GM23248 (cell line): ENCODE measurements at regions of chr13 and their contacts with region 1.

Region 1: DNA sequence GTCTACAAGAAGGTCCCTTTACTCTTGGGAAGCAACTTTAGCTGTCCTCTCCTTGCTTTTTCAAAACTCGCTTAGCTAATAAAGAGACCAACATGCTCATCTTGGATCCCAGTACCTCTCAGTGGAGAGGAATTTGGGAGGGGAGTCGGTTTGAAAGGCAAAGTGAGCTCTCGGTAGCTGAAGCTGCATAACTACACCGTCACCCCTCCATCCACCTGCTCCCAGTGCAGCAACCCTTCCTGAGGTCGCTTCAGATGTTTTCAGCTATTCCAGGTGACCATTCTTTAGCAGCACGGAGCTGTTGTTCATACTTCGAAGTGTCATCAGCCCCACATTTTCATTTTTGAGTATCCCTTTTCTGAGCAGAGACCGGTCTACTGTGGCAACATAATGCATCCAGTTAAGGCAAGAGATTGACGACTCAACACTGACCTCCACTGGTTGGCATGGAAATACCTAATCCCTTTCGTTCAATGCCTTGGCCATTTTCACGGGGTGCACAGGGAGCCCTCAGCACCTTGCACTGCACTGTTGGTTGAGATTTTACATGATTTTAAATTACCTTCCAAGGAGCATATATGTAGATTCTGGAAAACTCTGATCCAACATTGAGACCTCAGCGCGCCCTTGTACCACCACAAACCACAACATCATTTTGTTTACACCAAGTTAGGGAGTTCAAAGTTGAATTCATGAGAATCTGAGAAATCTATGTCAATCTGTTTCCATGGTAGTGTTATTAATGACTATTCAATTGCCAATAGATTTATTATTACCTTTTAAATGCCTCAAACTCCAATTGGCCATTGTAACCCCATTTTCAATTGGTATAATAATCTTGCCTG is 42.2 kb downstream of the DLEU7 start:
- DNase-seq: peak; percentile 82
- H3K4me3 ChIP-seq: no peak overlapping the region
- H3K27ac ChIP-seq: no peak overlapping the region
- H3K4me1 ChIP-seq: peaks cover 28% of the 10 kb centered on the region
- H3K27me3 ChIP-seq: no peaks in the 10 kb centered on the region

Region 2: DNA sequence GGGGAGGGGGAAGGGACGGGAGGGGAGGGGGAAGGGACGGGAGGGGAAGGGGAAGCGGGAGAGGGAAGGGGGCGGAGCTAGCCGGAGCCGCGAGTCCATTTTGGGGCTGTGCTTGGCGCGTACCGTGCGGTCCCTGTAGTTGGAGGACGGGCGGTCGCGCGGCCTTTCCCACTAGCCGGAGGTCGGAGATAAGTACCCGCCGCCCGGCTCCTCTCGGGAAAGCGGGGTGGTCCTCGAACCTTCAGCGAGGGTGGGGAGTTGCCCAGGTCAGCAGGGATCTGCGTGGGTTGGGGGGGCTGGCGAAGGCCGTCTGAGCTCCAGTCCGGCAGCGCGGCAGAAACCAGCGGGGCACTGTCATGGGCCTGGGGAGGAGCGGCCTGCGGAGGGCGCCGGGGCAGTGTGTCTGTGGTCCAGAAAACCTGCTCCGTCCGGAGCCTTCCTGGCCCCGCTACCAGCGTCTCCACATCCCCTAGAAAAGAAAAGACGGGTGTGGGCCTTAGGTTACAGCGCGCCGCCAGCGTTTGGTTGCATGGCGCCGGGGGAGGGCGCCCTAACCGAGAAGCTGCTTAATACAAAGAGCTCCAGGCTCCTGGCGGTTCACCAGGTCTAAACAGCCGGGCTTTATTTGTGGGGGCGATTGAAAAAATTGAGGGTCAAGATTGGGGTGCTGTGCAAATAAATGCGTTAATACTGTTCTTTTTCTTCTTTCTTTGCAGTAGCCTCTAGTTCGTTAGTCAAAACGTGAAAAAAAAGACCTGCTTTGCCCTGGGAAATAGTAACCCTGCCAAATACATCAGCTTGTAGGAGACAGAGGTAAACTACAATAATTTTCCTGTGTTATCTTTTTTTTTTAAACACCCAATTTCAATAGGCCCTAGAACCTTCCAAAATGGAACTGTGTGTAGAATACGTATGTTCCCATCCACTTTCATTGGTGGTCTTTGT is 804.1 kb before region 1 on chr13 and contains the start of gene TRIM13:
- in situ Hi-C with region 1: loop called (anchors 25 kb)
- DNase-seq: peak; percentile 96
- H3K4me3 ChIP-seq: peak within 1 kb of the TSS; percentile 93
- H3K27ac ChIP-seq: peak within 1 kb of the TSS; percentile 95
- H3K4me1 ChIP-seq: peaks cover 23% of the 10 kb centered on the region
- H3K27me3 ChIP-seq: no peaks in the 10 kb centered on the region
- total RNA-seq, gene TRIM13: 20.2 and 22.3 TPM in 2 replicates

Region 3: DNA sequence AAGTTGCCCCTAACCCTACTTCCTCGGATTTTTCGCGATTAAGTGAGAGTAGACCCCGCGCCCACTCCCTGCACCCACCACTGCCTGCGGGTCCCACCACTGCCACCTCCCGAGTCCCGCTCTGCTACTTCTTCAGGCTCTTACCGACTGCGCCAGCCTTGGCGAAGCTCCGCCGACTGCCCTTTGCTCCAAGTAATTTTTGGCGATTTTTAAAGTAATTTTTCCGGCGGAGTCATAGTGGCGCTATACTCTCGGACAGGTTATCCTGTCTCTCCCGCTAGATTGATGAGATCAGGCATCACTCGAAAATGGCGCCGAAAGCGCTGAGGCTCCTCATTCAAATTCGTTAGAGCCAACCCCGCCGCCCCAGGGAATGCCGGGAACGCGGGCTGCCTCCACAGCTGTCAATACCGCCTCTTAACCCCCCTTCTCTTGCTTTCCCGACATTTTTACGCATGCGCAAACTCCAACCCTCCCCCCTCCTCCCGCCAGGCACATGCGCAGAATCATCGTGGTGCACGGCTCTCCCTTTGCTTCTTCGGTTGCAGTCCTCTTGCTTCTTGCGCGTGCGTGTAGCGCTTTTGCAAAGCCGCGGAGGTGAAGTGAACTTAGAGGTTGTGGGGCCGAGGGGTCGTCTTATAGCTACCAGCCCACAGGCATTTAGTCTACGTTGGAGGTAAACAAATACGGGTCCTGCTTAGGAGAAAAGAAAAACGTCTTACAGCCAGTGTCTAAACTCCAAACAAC is 719.5 kb before region 1 on chr13:
- in situ Hi-C with region 1: loop called (anchors 10 kb)
- DNase-seq: peak; percentile 99
- H3K4me3 ChIP-seq: peak overlapping the region; percentile 78
- H3K27ac ChIP-seq: peak overlapping the region; percentile 81
- H3K4me1 ChIP-seq: peaks cover 32% of the 10 kb centered on the region
- H3K27me3 ChIP-seq: no peaks in the 10 kb centered on the region

Region 4: GRCh38 chr13:50529154-50529882 is 272.0 kb before region 1 on chr13:
- in situ Hi-C with region 1: loop called (anchors 10 kb)
- DNase-seq: peak; percentile 92
- H3K4me3 ChIP-seq: peak overlapping the region; percentile 47
- H3K27ac ChIP-seq: peak overlapping the region; percentile 86
- H3K4me1 ChIP-seq: peaks cover 31% of the 10 kb centered on the region
- H3K27me3 ChIP-seq: no peaks in the 10 kb centered on the region

Region 5: DNA sequence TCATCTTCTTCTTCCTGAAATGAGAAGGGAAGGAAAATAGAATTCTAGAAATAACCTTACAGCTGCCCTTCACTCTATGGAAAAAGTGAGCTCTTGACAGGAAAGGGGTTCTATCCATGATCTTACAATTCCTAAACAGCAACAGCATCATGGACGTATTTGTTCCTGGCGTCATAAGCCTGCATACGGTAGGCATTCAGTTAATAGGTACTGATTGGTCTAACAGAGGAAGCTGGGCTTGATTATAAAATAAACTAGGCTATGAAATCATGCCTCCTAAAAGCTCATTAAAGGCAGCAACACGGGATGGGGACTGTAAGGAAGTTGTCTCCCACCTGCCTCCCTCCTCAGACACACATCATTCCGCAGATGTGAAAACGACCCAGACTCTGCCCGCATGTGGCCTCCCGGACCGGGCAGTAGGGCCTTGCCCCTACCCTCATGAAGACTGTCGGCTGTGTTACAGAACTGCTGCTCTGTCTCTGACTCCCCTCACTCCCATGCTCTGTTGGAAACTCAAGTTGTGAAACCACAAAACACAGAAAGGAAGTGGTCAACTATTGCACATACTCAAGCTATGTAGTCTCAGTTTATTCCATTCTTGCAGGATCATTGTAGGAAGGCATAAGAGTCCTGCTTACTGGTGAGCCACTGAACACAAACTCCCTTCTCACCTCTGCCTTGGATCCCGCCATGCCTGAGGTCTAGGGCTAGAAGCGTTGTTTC is 87.6 kb before region 1 on chr13:
- in situ Hi-C with region 1: no loop called
- DNase-seq: peak; percentile 78
- H3K4me3 ChIP-seq: no peak overlapping the region
- H3K27ac ChIP-seq: no peak overlapping the region
- H3K4me1 ChIP-seq: peaks cover 18% of the 10 kb centered on the region
- H3K27me3 ChIP-seq: no peaks in the 10 kb centered on the region